Body of pancreas (tissue), 4 donors: ENCODE measurements at regions of chr16 and their contacts with region 1.

Region 1: DNA sequence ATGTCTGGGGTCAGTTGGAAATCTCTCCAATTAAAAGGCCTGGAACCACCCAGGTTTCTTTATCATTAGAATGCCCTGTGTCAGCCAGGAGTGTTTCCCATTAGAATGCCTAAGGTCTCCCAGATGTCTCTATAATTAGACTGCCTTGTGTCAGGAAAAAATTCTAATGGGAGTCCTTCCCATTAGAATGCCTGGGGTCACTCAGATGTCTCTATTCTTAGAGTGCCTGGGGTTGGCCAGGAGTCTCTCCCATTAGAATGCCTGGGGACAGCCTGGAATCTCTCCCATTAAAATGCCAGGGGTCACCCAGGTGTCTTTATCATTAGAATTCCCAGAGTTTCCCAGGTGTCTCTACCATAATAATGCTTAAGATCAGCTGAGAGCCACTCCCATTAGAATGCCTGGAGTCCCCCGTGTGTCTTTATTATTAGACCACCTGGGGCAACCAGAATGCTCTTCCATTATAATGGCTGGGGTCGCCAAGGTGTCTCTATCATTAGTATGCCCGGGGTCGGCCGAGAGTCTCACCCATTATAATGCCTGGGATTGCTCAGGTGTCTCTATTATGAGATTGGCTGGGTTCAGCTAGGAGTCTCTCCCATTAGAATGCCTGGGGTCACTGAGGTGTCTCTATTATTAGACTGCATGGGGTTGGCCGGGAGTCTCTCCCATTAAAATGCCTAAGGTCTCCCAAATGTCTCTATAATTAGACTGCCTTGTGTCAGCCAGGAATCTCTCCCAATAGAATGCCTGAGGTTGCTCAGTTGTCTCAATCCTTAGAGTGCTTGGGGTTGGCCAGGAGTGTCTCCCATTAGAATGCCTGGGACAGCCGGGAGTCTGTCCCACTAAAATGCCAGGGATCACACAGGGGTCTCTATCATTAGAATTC is 2254.6 kb downstream of the TP53TG3F start:
- DNase-seq: no peak
- ATAC-seq: no peak
- H3K4me3 ChIP-seq: no peak overlapping the region
- H3K27ac ChIP-seq: no peak overlapping the region
- H3K4me1 ChIP-seq: no peaks in the 10 kb centered on the region
- H3K27me3 ChIP-seq: no peaks in the 10 kb centered on the region
- CTCF ChIP-seq: no peak
- POLR2A ChIP-seq: no peak

Region 2: GRCh38 chr16:35463358-35463757 is 250.6 kb before region 1 on chr16:
- intact Hi-C with region 1: loop called (anchors 10 kb)
- DNase-seq: no peak
- ATAC-seq: no peak
- H3K4me3 ChIP-seq: no peak overlapping the region
- H3K27ac ChIP-seq: no peak overlapping the region
- H3K4me1 ChIP-seq: no peaks in the 10 kb centered on the region
- H3K27me3 ChIP-seq: no peaks in the 10 kb centered on the region
- CTCF ChIP-seq: no peak
- POLR2A ChIP-seq: no peak

Region 3: DNA sequence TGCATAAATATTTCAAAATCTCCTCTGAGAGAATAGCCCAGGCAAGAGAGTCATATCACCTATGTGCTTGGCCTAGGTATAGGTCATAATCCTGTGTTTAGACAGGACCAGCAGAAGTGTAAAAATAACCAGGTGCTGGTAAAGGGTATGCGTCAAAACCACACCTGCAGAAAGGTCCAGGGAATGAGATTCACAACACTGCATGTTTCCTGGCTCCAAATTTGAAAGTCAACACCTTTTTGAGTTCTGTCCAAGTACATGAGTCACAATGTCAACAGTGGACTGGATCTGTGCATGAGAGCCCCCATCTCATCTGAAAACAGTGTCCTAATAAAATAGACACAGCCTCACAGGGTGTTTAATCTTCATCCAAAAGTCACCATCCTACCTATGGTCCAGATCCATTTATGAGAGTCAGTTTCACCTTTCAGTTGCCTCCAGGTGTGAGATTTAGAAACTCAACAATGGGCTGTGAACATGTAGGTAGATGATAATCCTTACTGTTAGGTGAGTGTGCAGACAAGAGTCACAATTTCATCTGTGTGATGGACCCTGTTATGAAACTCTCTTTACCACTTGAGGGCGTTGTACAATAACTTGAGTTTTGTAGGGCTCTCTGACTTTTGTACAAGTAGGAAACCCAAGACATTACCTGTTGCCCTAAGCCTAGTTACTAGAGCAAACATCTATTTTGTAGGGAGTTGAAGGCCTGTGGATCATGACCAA is 153.9 kb before region 1 on chr16:
- intact Hi-C with region 1: no loop called
- DNase-seq: no peak
- ATAC-seq: peak; percentile 45
- H3K4me3 ChIP-seq: no peak overlapping the region
- H3K27ac ChIP-seq: no peak overlapping the region
- H3K4me1 ChIP-seq: no peaks in the 10 kb centered on the region
- H3K27me3 ChIP-seq: no peaks in the 10 kb centered on the region
- CTCF ChIP-seq: no peak
- POLR2A ChIP-seq: no peak